ENCODE measurements at regions of chr10 and their contacts with region 1.

Region 1: DNA sequence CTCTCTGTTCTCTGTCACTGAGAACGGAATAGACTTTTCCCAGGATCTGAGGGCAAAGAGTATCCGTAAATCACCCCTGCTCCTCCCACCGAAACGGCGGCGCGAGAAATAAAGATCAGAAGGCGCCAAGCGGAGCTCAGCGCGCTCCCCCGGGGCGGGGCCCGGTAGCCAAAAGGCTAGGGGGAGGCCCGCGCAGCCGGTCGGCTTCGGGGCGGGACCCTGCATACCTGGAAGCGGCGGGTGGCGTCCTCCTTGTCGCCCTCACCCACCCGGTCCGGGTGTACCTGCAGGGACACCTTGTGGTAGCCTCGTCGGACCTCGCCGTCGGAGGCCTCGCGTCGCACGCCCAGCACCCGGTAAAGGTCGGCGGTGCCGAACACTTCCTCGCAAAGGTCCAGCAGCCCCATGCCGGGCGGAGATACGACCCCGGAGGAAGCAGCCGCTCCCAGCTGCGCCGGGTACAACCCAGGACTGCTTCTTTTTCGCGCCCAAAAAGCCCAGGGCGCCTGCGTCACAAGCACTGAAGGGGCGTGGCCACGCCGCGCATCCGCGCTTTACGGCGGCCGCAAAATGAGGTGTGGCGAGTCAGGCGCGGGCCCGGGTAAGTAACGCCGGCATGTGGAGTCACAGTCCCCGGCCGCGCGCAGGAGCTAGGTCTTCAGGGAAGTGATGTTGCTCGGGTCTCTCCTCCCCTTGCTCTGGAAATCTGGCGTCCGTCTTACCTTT is at the start of gene DNAJC9:
- DNase-seq: peak; percentile 99
- ATAC-seq: peak; percentile 94
- H3K4me3 Mint-ChIP-seq: peak within 1 kb of the TSS; percentile 100
- H3K27ac Mint-ChIP-seq: peak within 1 kb of the TSS; percentile 97
- H3K4me1 Mint-ChIP-seq: peaks cover 58% of the 10 kb centered on the region
- H3K27me3 Mint-ChIP-seq: no peaks in the 10 kb centered on the region
- total RNA-seq, gene DNAJC9: 50.1 to 51.8 TPM

Region 2: DNA sequence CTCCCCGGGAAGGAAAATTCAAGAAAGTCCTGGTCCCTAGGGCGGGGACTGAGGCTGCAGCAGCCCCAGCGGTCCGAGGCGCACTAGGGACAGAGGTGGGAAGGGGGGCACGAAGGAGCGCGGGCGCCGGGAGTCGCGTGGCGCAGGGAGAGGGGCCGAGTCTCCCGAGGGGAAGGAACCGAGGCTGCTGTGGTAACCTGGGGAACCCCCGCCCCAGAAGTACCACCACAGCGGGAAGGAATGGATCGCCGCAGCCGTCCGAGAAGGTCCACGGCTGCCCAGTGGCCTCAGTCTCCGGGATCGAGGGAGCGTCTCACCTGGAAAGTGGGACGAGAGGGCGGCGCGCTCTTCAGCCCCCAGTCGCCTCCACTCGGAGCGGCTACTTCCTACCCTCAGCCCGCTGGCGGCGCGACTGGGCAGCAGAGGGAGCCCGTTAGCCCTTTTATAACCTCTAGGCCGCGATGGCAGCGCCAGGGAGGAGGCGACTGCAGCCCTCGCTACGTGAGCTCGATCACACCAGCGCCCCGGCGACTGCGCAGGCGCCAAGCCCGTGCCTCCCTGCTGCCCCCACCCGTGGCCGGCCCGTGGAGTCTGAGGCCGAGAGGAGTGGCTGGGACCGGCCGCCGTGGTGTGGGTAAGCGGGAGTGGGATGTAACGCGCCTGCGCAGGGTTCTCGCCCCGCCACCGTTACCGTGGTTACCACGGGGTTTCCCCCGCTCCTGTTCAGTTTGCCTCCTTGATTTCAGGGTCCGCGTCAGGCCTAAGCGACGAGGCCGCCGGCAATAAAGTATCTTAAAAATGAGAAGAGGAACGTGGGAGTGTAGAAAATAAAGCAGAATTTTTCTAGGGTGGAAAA is 150.3 kb before region 1 on chr10 and contains the start of gene P4HA1:
- POLR2A ChIA-PET with region 1: interaction called, 11 read pairs
- DNase-seq: peak; percentile 96
- ATAC-seq: peak; percentile 95
- H3K4me3 Mint-ChIP-seq: peak within 1 kb of the TSS; percentile 91
- H3K27ac Mint-ChIP-seq: peak within 1 kb of the TSS; percentile 92
- H3K4me1 Mint-ChIP-seq: peaks cover 30% of the 10 kb centered on the region
- H3K27me3 Mint-ChIP-seq: no peaks in the 10 kb centered on the region
- total RNA-seq, gene P4HA1: 47.3 to 51.2 TPM

Region 3: DNA sequence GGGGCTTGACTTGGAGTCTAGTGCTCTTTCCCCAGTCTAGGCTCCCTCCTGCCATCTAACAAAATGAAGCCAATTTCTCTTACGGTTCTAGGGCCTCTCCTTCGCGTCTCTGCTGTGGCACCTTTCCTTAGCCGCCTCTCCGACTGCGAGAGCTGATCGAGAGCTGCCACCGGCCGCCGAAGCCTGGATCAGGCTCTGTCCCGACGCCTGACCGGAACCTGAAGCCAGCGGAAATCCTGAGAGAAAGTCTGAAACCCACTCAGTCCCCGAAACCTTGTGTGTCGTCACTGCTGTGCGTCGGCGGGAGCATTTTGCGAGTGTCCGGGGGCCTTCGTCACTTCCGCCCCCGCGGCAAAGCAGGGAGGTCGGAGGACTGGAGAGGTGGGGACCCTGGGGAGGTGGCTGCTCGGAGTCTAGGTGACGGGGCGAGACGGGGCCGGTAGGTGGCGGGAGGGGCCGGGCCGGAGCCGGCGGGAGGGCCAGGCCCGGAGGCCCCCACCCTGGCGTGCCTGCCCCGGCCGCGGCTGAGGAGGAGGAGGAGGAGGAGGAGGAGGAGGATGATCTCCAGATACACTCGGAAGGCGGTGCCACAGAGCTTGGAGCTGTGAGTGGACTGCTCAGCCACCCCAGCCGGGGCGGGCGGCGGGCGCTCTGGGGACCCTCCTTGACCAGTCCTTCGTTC is 79.0 kb before region 1 on chr10 and contains the starts of genes ECD and FAM149B1:
- POLR2A ChIA-PET with region 1: interaction called, 13 read pairs
- DNase-seq: peak; percentile 92
- ATAC-seq: peak; percentile 96
- H3K4me3 Mint-ChIP-seq: peak within 1 kb of the TSS; percentile 99
- H3K27ac Mint-ChIP-seq: peak within 1 kb of the TSS; percentile 100
- H3K4me1 Mint-ChIP-seq: peaks cover 27% of the 10 kb centered on the region
- H3K27me3 Mint-ChIP-seq: no peaks in the 10 kb centered on the region
- total RNA-seq, gene ECD: 30.1 to 31.7 TPM
- total RNA-seq, gene FAM149B1: 15.6 to 18.4 TPM

Region 4: DNA sequence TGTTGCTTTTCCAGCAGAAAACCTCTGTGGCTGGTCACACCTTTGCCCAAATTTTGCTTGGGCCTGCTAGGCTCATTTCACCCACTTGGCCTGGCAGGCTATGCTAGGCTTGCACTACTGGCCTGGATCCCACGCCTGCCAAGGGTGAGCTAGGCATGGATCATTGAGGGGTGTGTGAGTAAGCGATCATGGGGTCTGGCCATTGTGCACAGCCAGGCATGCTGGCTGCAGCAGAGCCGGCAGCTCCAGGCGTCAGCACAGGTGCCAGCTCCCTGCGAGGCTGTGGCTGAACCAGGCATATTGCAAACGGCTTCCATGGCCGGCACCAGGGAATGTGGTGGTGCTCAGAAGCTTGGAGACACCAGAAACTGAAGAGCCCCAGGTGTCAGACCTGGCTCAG is 92.5 kb after region 1 on chr10:
- POLR2A ChIA-PET with region 1: no interaction called
- DNase-seq: no peak
- ATAC-seq: no peak
- H3K4me3 Mint-ChIP-seq: no peak overlapping the region
- H3K27ac Mint-ChIP-seq: no peak overlapping the region
- H3K4me1 Mint-ChIP-seq: no peaks in the 10 kb centered on the region
- H3K27me3 Mint-ChIP-seq: no peaks in the 10 kb centered on the region

Region 5: GRCh38 chr10:73358331-73359279 is 111.7 kb after region 1 on chr10 and contains the start of gene CFAP70:
- POLR2A ChIA-PET with region 1: interaction called, 14 read pairs
- DNase-seq: peak; percentile 91
- ATAC-seq: peak; percentile 99
- H3K4me3 Mint-ChIP-seq: peak within 1 kb of the TSS; percentile 97
- H3K27ac Mint-ChIP-seq: peak within 1 kb of the TSS; percentile 91
- H3K4me1 Mint-ChIP-seq: peaks cover 9% of the 10 kb centered on the region
- H3K27me3 Mint-ChIP-seq: no peaks in the 10 kb centered on the region
- total RNA-seq, gene CFAP70: 2.0 to 2.2 TPM

Region 6: GRCh38 chr10:73413528-73414229 is 166.7 kb after region 1 on chr10 and contains the start of gene ANXA7:
- POLR2A ChIA-PET with region 1: interaction called, 11 read pairs
- DNase-seq: peak; percentile 92
- ATAC-seq: peak; percentile 97
- H3K4me3 Mint-ChIP-seq: peak within 1 kb of the TSS; percentile 94
- H3K27ac Mint-ChIP-seq: peak within 1 kb of the TSS; percentile 90
- H3K4me1 Mint-ChIP-seq: peaks cover 31% of the 10 kb centered on the region
- H3K27me3 Mint-ChIP-seq: peaks cover 2% of the 10 kb centered on the region
- total RNA-seq, gene ANXA7: 88.9 to 90.6 TPM

Region 7: GRCh38 chr10:73495884-73496674 is 249.1 kb after region 1 on chr10 and contains the start of gene PPP3CB:
- POLR2A ChIA-PET with region 1: interaction called, 20 read pairs
- DNase-seq: no peak
- ATAC-seq: peak; percentile 80
- H3K4me3 Mint-ChIP-seq: peak within 1 kb of the TSS; percentile 98
- H3K27ac Mint-ChIP-seq: peak within 1 kb of the TSS; percentile 96
- H3K4me1 Mint-ChIP-seq: peaks cover 28% of the 10 kb centered on the region
- H3K27me3 Mint-ChIP-seq: no peaks in the 10 kb centered on the region
- total RNA-seq, gene PPP3CB: 41.7 to 42.2 TPM

Measured in activated naive CD8-positive, alpha-beta T cell treated with anti-CD3 and anti-CD28 coated beads, Interleukin-2, amount 10 ng/mL, durations not matched to agents 7 days and 5 days (primary cell).